ENCODE measurements at regions of chr4 and their contacts with region 1.

Region 1: DNA sequence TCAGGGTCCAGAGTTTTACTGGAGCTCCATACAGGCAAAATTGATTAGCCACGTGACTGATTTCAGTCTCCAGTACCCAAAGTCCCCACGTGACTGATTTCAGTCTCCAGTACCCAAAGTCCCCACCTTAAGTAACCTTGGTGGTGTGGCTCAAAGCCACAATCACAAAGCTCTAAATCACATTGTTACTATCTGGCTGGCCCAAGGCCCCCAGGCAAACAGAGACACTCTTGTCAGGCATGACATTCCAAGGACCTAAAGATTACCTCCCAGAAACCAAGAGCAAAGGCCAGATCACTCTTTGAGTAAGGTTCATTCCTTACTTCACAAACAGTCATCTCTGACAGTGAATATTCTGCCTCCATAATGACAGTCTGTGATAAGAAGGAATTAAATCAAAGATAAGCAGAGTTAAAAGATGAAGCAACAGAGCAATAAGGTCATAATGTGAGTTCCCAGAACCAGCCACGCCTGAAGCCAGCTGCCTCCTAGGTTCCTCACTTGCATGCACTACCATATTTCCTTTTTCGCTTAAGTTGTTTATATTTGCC is 78.5 kb downstream of the ANXA3 start:
- DNase-seq: no peak
- ATAC-seq: peak; percentile 27
- H3K4me3 ChIP-seq: no peak overlapping the region
- H3K27ac ChIP-seq: no peak overlapping the region
- H3K4me1 ChIP-seq: peaks cover 39% of the 10 kb centered on the region
- H3K27me3 ChIP-seq: no peaks in the 10 kb centered on the region
- CTCF ChIP-seq: no peak
- EP300 ChIP-seq: no peak
- POLR2A ChIP-seq: no peak
- RAD21 ChIP-seq: no peak

Region 2: GRCh38 chr4:78032445-78033328 is 597.4 kb before region 1 on chr4:
- CTCF ChIA-PET with region 1: no interaction called
- POLR2A ChIA-PET with region 1: no interaction called
- RAD21 ChIA-PET with region 1: no interaction called
- SMC1A ChIA-PET with region 1: no interaction called
- in situ Hi-C with region 1: no loop called
- intact Hi-C with region 1: no loop called
- DNase-seq: no peak
- ATAC-seq: no peak
- H3K4me3 ChIP-seq: no peak overlapping the region
- H3K27ac ChIP-seq: no peak overlapping the region
- H3K4me1 ChIP-seq: no peaks in the 10 kb centered on the region
- H3K27me3 ChIP-seq: peaks cover 0 to 2% of the 10 kb centered on the region in 2 experiments; a peak in 1 of 4 replicates
- CTCF ChIP-seq: no peak; a peak in 1 of 6 replicates
- EP300 ChIP-seq: no peak
- POLR2A ChIP-seq: no peak
- RAD21 ChIP-seq: no peak

Region 3: GRCh38 chr4:78650091-78651024 is 20.3 kb after region 1 on chr4:
- CTCF ChIA-PET with region 1: interaction called, 17 read pairs
- POLR2A ChIA-PET with region 1: interaction called, 4 read pairs
- RAD21 ChIA-PET with region 1: interaction called, 79 read pairs
- SMC1A ChIA-PET with region 1: interaction called, 99 read pairs
- in situ Hi-C with region 1: no loop called
- intact Hi-C with region 1: no loop called
- DNase-seq: no peak
- ATAC-seq: no peak
- H3K4me3 ChIP-seq: no peak overlapping the region
- H3K27ac ChIP-seq: no peak overlapping the region
- H3K4me1 ChIP-seq: peaks cover 4% of the 10 kb centered on the region; the same call in 1 of the 2 replicates
- H3K27me3 ChIP-seq: no peaks in the 10 kb centered on the region
- CTCF ChIP-seq: no peak
- EP300 ChIP-seq: no peak
- POLR2A ChIP-seq: no peak
- RAD21 ChIP-seq: no peak

Measured in GM12878 (cell line).